CD4-positive, alpha-beta T cell (primary cell): ENCODE measurements at regions of chr17 and their contacts with region 1.

Region 1: GRCh38 chr17:64455993-64456885 is 7.3 kb downstream of the MILR1 start:
- DNase-seq: peak in 3 of 14 experiments; percentile 27 to 67 (median 32)
- ATAC-seq: peak; percentile 59
- H3K4me3 ChIP-seq: no peak overlapping the region
- H3K4me3 Mint-ChIP-seq: peak overlapping the region; percentile 9
- H3K27ac ChIP-seq: peak overlapping the region in 1 of 2 donors; percentile 37
- H3K27ac Mint-ChIP-seq: peak overlapping the region; percentile 74
- H3K4me1 ChIP-seq: peaks cover 24% of the 10 kb centered on the region
- H3K4me1 Mint-ChIP-seq: peaks cover 31% of the 10 kb centered on the region
- H3K27me3 ChIP-seq: no peaks in the 10 kb centered on the region
- H3K27me3 Mint-ChIP-seq: no peaks in the 10 kb centered on the region
- CTCF ChIP-seq: no peak

Region 2: DNA sequence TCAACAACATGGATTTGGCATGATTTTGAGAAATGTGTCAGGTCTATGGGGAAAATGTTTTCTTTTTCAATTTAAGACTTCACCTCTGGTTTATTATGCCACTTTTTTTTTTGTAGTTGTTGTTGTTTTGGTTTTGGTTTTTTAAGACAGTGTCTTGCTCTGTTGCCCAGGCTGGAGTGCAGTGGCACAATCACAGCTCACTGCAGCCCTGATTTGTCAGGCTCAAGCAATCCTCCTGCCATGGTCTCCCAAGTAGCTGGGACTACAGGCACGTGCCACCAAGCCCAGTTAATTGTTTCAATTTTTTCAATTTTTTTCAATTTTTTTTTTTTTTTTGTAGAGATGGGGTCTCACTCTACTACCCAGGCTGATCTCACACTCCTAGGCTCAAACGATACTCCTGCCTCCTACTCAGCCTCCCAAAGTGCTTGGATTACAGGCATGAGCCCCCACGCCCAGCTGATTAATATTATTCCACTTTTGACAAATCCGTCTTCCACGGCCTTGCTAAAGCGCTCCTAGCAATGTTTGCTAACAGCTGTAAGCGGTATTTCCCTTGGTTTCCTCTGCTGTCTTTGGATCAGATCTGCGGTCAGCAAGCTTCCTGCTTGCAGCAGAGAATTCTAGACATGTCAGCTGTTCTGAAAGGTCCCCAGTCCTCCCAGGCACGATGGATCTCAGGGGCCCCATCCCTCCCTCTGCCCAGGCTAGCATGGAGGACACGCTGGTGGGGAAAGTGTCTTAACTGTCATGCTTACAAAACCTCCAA is 14.3 kb before region 1 on chr17:
- CTCF ChIA-PET with region 1: no interaction called
- POLR2A ChIA-PET with region 1: interaction called, 15 read pairs
- intact Hi-C with region 1: no loop called
- DNase-seq: peak in 10 of 14 experiments; percentile 5 to 74 (median 16)
- ATAC-seq: peak; percentile 82
- H3K4me3 ChIP-seq: peak overlapping the region; percentile 32
- H3K4me3 Mint-ChIP-seq: peak overlapping the region; percentile 69
- H3K27ac ChIP-seq: peak overlapping the region; percentile 18 to 53
- H3K27ac Mint-ChIP-seq: peak overlapping the region; percentile 79
- H3K4me1 ChIP-seq: peaks cover 23% of the 10 kb centered on the region
- H3K4me1 Mint-ChIP-seq: peaks cover 33% of the 10 kb centered on the region
- H3K27me3 ChIP-seq: no peaks in the 10 kb centered on the region
- H3K27me3 Mint-ChIP-seq: no peaks in the 10 kb centered on the region
- CTCF ChIP-seq: no peak

Region 3: DNA sequence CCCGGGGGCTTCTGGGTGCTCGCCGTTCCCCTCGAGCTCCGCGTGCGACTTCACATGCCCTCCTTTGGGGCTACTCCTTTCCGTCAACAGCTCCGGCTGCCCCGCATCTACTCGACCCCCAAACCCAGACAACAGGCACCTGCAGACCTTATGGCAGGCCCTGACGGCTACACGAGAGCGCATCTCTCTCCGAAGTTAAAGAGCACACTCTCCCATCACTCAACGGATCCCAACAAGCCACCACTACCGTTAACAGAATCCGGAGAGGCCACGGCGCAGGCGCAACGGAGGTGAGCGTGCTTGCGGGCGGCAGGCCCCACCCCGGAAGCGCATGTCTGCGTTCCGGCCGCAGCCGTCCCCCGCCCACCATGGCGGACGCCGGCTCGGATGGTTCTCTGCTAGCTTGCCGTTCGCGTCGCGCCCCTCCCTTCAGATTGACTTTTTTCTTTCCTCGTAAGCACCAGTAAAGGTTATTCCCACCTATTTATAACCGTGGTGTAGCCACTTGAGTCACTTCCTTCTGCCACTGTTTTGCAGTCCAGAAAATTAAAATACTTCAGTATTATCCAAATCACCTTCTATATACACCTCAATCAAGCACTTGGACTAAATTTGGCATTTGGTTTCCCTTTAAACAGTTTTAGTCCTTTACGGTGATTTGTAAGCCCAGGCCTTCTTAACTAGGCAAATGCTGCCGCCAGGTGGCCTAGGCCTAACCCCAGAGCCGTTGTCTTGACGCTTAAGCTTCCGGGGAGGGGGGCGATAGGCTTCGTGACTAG is 40.7 kb after region 1 on chr17 and contains the start of gene POLG2:
- CTCF ChIA-PET with region 1: interaction called, 3 read pairs
- POLR2A ChIA-PET with region 1: interaction called, 18 read pairs
- intact Hi-C with region 1: no loop called
- DNase-seq: peak; percentile 93 to 99 (median 95)
- ATAC-seq: peak; percentile 77
- H3K4me3 ChIP-seq: peak within 1 kb of the TSS; percentile 77
- H3K4me3 Mint-ChIP-seq: peak within 1 kb of the TSS; percentile 100
- H3K27ac ChIP-seq: peak within 1 kb of the TSS; percentile 85 to 91
- H3K27ac Mint-ChIP-seq: peak within 1 kb of the TSS; percentile 99
- H3K4me1 ChIP-seq: peaks cover 44% of the 10 kb centered on the region
- H3K4me1 Mint-ChIP-seq: peaks cover 83% of the 10 kb centered on the region
- H3K27me3 ChIP-seq: no peaks in the 10 kb centered on the region
- H3K27me3 Mint-ChIP-seq: no peaks in the 10 kb centered on the region
- CTCF ChIP-seq: peak; percentile 56
- total RNA-seq, gene POLG2: 32.8 to 34.1 TPM

Region 4: DNA sequence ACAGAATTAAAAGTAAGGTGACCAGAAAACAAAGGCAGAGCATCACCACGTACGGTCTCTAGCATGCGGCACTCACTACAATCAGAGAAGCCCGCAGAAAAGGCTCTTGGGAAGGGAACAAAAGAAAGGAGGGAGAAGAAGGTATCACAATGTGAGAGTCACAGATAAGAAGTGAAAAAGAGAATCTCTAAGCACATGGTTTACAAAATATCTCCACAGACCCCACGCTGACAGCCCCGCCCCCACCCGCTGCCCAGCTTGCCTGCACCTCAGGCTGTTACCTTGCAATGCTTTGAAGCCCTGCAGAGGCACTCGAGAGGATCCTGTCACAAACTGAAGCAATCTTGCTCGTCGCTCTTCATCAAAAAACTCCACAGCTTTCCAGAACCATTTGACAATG is 91.1 kb after region 1 on chr17:
- CTCF ChIA-PET with region 1: no interaction called
- POLR2A ChIA-PET with region 1: no interaction called
- intact Hi-C with region 1: no loop called
- DNase-seq: no peak
- ATAC-seq: no peak
- H3K4me3 ChIP-seq: no peak overlapping the region
- H3K4me3 Mint-ChIP-seq: no peak overlapping the region
- H3K27ac ChIP-seq: no peak overlapping the region
- H3K27ac Mint-ChIP-seq: no peak overlapping the region
- H3K4me1 ChIP-seq: no peaks in the 10 kb centered on the region
- H3K4me1 Mint-ChIP-seq: no peaks in the 10 kb centered on the region
- H3K27me3 ChIP-seq: no peaks in the 10 kb centered on the region
- H3K27me3 Mint-ChIP-seq: no peaks in the 10 kb centered on the region
- CTCF ChIP-seq: no peak

Region 5: DNA sequence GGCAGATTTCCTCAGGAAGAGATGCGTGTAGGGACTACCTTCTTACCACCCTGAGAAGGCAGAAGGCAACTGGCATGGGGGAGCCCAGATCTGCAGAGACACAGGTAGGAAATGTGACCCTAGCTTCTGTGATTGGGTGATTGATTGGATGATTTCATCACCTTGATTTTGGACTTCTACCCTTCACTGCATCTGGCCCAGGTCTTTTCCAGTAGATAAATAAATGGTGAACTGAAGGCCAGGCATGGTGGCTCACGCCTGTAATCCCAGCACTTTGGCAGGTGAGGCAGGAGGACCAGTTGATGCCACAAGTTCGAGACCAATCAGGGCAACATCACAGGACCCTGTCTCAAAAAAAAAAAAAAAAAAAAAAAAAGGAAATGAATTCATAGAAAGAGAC is 220.5 kb after region 1 on chr17:
- CTCF ChIA-PET with region 1: no interaction called
- POLR2A ChIA-PET with region 1: no interaction called
- intact Hi-C with region 1: no loop called
- DNase-seq: no peak
- ATAC-seq: no peak
- H3K4me3 ChIP-seq: no peak overlapping the region
- H3K4me3 Mint-ChIP-seq: no peak overlapping the region
- H3K27ac ChIP-seq: no peak overlapping the region
- H3K27ac Mint-ChIP-seq: no peak overlapping the region
- H3K4me1 ChIP-seq: no peaks in the 10 kb centered on the region
- H3K4me1 Mint-ChIP-seq: no peaks in the 10 kb centered on the region
- H3K27me3 ChIP-seq: no peaks in the 10 kb centered on the region
- H3K27me3 Mint-ChIP-seq: no peaks in the 10 kb centered on the region
- CTCF ChIP-seq: no peak